CD4-positive, alpha-beta memory T cell (primary cell): ENCODE measurements at regions of chr3 and their contacts with region 1.

Region 1: GRCh38 chr3:136919799-136920580 is 37.8 kb upstream of the IL20RB start:
- DNase-seq: peak; percentile 64 to 78 (median 69)
- H3K4me3 ChIP-seq: no peak overlapping the region
- H3K4me3 Mint-ChIP-seq: peak overlapping the region; percentile 25 to 91 (median 74)
- H3K27ac ChIP-seq: peak overlapping the region; percentile 55
- H3K27ac Mint-ChIP-seq: peak overlapping the region; percentile 81 to 95 (median 86)
- H3K4me1 ChIP-seq: peaks cover 93% of the 10 kb centered on the region
- H3K4me1 Mint-ChIP-seq: peaks cover 64 to 90% (median 77%) of the 10 kb centered on the region in 4 donors
- H3K27me3 ChIP-seq: no peaks in the 10 kb centered on the region
- H3K27me3 Mint-ChIP-seq: no peaks in the 10 kb centered on the region

Region 2: GRCh38 chr3:136250226-136250902 is 669.6 kb before region 1 on chr3 and contains the start of gene PCCB:
- CTCF ChIA-PET with region 1: no interaction called
- POLR2A ChIA-PET with region 1: no interaction called
- intact Hi-C with region 1: loop called (anchors 5 kb)
- DNase-seq: peak; percentile 93 to 96 (median 94)
- H3K4me3 ChIP-seq: peak within 1 kb of the TSS; percentile 43 to 77
- H3K4me3 Mint-ChIP-seq: peak within 1 kb of the TSS; percentile 85 to 93 (median 90)
- H3K27ac ChIP-seq: peak within 1 kb of the TSS; percentile 75
- H3K27ac Mint-ChIP-seq: peak within 1 kb of the TSS; percentile 75 to 94 (median 90)
- H3K4me1 ChIP-seq: peaks cover 17% of the 10 kb centered on the region
- H3K4me1 Mint-ChIP-seq: peaks cover 15 to 27% (median 20%) of the 10 kb centered on the region in 4 donors
- H3K27me3 ChIP-seq: no peaks in the 10 kb centered on the region
- H3K27me3 Mint-ChIP-seq: no peaks in the 10 kb centered on the region
- total RNA-seq, gene PCCB: 12.1 to 12.4 TPM

Region 3: DNA sequence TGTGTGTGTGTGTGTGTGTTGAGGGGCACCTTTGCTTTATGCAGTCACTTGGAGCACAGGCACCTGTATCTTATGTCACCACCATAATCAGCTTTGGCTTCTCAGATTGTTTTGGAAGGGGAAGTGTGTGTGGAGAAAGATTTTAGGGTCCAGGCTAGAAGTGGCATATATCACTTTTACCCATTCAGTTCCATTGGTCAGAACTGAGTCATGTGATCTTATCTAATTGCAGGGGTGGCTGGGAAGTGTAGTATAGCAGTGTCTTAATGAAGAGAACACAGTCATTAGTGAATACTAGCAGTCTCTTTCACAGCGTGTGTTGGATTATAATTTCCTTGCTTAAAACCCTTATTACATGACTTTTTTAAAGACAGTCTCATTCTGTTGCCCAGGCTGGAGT is 37.4 kb before region 1 on chr3:
- CTCF ChIA-PET with region 1: interaction called, 4 read pairs
- POLR2A ChIA-PET with region 1: interaction called, 3 read pairs
- intact Hi-C with region 1: loop called (anchors 5 kb)
- DNase-seq: peak in 2 of 5 donors; percentile 28
- H3K4me3 ChIP-seq: no peak overlapping the region
- H3K4me3 Mint-ChIP-seq: peak overlapping the region in 3 of 8 donors; percentile 11 to 61 (median 37)
- H3K27ac ChIP-seq: no peak overlapping the region
- H3K27ac Mint-ChIP-seq: peak overlapping the region; percentile 5 to 91 (median 72)
- H3K4me1 ChIP-seq: peaks cover 73% of the 10 kb centered on the region
- H3K4me1 Mint-ChIP-seq: peaks cover 58 to 89% (median 72%) of the 10 kb centered on the region in 4 donors
- H3K27me3 ChIP-seq: no peaks in the 10 kb centered on the region
- H3K27me3 Mint-ChIP-seq: no peaks in the 10 kb centered on the region

Region 4: GRCh38 chr3:136909187-136909586 is 10.8 kb before region 1 on chr3:
- CTCF ChIA-PET with region 1: interaction called, 4 read pairs
- POLR2A ChIA-PET with region 1: interaction called, 15 read pairs
- intact Hi-C with region 1: no loop called
- DNase-seq: no peak
- H3K4me3 ChIP-seq: no peak overlapping the region
- H3K4me3 Mint-ChIP-seq: peak overlapping the region; percentile 1 to 67 (median 36)
- H3K27ac ChIP-seq: peak overlapping the region; percentile 2
- H3K27ac Mint-ChIP-seq: peak overlapping the region; percentile 62 to 90 (median 71)
- H3K4me1 ChIP-seq: peaks cover 84% of the 10 kb centered on the region
- H3K4me1 Mint-ChIP-seq: peaks cover 65 to 86% (median 75%) of the 10 kb centered on the region in 4 donors
- H3K27me3 ChIP-seq: no peaks in the 10 kb centered on the region
- H3K27me3 Mint-ChIP-seq: no peaks in the 10 kb centered on the region